Left colon (tissue), 2 donors: ENCODE measurements at regions of chr14 and their contacts with region 1.

Region 1: GRCh38 chr14:31159682-31160296 is 47.8 kb downstream of the HECTD1 start:
- DNase-seq: no peak
- ATAC-seq: no peak

Region 2: DNA sequence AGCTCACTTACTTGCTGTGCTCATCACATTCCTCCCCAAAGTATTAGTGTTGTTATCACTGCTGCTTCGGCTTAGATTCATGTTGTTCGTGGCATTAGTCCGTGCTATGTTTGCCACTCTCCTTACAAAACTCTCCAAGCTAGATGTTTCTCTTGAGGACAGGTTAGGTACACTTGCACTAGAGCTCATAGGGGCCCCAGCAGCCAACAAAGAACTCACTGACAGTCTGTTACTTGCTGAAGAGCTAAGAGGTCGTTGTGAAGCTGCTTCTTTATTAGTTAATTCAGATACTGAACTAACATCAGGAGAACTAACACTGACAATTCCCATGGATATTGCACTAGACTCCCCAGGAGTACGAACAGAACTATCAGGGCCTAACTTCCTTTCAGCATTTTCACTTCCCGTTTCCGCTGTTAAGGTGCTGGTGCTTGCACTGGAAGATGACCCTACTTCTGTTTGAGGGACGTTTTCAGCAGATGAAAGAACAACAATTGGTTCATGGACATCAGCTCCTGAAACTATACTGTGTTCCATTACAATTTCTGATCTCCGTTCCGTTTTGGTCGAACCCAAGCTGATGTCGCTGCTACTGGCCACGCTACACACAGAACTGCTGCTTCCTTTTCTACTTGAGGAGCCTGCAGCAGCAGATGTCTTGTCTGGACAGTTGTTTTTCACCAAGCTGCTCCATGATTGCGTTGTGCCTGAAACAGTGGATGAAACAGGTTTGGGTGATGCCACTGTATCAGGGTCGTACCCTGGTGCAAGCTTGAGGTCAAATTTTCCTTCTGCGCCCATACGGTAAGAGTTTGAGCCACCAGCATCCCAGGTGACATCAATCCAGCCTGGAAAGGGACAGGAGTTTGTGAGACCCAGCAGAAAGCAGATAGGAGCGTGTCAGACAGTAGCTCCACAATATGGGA is 30.9 kb before region 1 on chr14:
- intact Hi-C with region 1: loop called in 1 of 2 experiments (anchors 2 kb)
- DNase-seq: no peak
- ATAC-seq: no peak

Region 3: DNA sequence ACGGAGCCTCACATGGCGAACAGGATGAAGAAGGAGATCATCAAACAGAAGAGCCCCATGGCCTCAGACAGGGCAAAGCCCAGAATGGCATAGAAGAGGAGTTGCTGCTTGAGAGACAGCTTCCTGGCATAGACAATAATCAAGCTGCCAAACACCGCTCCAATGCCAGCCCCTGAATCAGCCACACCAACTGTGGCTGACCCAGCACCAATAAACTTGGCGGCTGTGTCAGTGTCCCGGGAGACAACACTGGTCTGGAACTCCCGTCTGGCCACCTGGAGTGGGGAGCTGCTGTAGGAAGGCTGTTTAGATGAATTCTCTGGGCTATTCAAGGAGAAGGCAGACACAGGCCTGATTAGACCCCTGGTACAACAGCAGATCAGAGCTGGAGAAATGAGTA is 160.4 kb after region 1 on chr14:
- intact Hi-C with region 1: no loop called
- DNase-seq: no peak
- ATAC-seq: no peak

Region 4: DNA sequence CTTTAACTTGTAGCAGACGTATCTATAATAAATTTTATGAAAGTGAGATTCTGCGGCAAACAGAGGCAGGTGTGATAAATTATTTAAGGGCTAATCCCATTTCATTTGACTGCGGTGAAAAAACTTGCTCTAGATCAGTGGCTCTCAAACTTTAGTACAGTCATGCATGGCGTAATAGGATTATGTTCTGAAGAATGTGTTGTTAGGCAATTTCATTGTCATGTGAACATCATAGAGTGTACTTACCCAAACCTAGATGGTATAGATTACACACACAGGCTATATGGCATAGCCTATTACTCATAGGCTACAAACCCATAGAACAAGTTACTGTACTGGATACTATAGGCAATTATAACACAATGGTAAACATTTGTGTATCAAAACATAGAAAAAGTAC is 176.9 kb after region 1 on chr14:
- intact Hi-C with region 1: no loop called
- DNase-seq: no peak
- ATAC-seq: no peak